Esophagus muscularis mucosa (tissue), 4 donors: ENCODE measurements at regions of chr6 and their contacts with region 1.

Region 1: GRCh38 chr6:10609995-10610688 is 84.3 kb downstream of the C6orf52 start:
- DNase-seq: no peak
- H3K4me3 ChIP-seq: no peak overlapping the region
- H3K27ac ChIP-seq: peak overlapping the region; percentile 69 to 80 (median 78)
- H3K4me1 ChIP-seq: peaks cover 14 to 82% (median 73%) of the 10 kb centered on the region in 4 donors
- H3K27me3 ChIP-seq: no peaks in the 10 kb centered on the region
- CTCF ChIP-seq: no peak
- EP300 ChIP-seq: no peak
- POLR2A ChIP-seq: no peak

Region 2: GRCh38 chr6:10014557-10014956 is 595.6 kb before region 1 on chr6:
- intact Hi-C with region 1: no loop called
- DNase-seq: no peak
- H3K4me3 ChIP-seq: no peak overlapping the region
- H3K27ac ChIP-seq: no peak overlapping the region
- H3K4me1 ChIP-seq: no peaks in the 10 kb centered on the region
- H3K27me3 ChIP-seq: peaks cover 0 to 4% (median 0%) of the 10 kb centered on the region in 4 donors
- CTCF ChIP-seq: no peak
- EP300 ChIP-seq: no peak
- POLR2A ChIP-seq: no peak

Region 3: DNA sequence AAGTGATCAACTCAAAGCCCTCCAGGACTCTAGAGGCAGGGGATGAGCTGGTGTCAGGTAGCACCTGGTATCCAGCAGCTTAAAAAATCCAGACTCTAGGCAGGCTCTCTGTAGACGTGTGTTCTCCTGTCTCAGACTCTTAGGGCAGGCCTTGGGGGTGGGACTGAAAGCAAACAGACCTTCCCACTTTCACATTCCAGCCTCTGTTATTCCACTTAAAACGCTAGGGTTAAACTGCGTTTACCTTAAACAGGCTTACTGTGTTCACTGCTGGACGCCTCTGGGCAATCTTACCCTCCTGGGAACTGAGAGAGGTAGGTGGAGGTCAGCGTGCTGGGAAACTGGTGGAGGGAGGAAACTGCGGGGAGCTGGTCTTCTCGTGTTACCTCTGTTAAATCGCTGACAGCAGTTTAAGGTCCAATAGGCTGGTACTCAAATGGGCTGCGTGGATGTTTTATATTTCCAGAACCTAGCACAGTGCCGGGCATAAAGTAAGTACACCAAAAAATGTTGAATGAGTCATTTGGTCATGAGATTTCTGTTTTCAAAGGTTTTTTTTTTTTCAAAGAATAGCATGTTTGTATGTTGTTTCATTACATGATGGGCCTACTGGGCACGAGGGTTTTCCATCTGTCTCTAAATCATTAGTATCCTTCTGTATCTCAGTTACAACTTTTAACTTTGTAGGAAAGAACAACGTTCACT is 88.9 kb before region 1 on chr6 and contains the start of gene GCNT2:
- intact Hi-C with region 1: loop called (anchors 5 kb)
- DNase-seq: no peak
- H3K4me3 ChIP-seq: peak within 1 kb of the TSS; percentile 27 to 53 (median 40)
- H3K27ac ChIP-seq: peak within 1 kb of the TSS; percentile 73 to 80 (median 76)
- H3K4me1 ChIP-seq: peaks cover 0 to 34% (median 27%) of the 10 kb centered on the region in 4 donors
- H3K27me3 ChIP-seq: no peaks in the 10 kb centered on the region
- CTCF ChIP-seq: no peak
- EP300 ChIP-seq: no peak
- POLR2A ChIP-seq: no peak
- total RNA-seq, gene GCNT2: 15.8 to 23.2 (median 19.4) TPM

Region 4: DNA sequence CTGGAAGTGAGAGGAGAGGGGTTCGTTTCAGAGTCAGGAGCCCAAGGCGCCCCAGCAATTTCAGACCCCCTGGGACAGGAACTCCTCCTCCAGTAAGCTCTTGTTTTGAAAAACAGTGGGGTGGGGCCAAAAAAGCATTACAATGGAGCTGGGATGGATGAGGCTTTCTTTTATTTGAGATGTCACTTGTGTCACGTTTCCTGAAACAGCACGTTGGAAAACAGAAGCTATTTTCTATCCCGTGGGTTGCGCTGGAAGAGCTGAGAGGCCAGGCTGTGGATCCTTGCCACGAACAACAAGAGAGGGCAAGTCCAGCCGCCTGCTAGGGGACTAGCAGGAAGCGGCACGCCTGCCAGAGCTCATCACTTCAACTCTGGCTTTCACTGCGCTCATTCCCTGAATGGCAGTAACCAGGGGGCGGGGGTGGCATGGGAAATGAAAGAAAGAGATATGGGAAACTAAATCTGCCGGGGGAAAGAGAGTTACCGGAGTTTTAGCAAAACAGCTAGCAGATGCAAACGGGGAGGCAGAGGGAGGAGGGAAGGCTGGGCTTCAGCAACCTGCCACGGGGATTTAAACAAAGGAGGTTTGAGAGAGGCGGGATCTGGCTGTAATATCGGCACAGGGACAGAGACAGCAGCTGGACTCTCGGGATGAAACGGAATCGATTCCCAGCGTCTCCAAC is 54.4 kb before region 1 on chr6:
- intact Hi-C with region 1: loop called (anchors 5 kb)
- DNase-seq: peak; percentile 94
- H3K4me3 ChIP-seq: peak overlapping the region; percentile 50 to 59 (median 56)
- H3K27ac ChIP-seq: peak overlapping the region; percentile 80 to 85 (median 82)
- H3K4me1 ChIP-seq: peaks cover 29 to 63% (median 62%) of the 10 kb centered on the region in 4 donors
- H3K27me3 ChIP-seq: no peaks in the 10 kb centered on the region
- CTCF ChIP-seq: no peak
- EP300 ChIP-seq: no peak
- POLR2A ChIP-seq: no peak